Left ventricle myocardium superior (tissue), 1 donor: ENCODE measurements at regions of chr9 and their contacts with region 1.

Region 1: DNA sequence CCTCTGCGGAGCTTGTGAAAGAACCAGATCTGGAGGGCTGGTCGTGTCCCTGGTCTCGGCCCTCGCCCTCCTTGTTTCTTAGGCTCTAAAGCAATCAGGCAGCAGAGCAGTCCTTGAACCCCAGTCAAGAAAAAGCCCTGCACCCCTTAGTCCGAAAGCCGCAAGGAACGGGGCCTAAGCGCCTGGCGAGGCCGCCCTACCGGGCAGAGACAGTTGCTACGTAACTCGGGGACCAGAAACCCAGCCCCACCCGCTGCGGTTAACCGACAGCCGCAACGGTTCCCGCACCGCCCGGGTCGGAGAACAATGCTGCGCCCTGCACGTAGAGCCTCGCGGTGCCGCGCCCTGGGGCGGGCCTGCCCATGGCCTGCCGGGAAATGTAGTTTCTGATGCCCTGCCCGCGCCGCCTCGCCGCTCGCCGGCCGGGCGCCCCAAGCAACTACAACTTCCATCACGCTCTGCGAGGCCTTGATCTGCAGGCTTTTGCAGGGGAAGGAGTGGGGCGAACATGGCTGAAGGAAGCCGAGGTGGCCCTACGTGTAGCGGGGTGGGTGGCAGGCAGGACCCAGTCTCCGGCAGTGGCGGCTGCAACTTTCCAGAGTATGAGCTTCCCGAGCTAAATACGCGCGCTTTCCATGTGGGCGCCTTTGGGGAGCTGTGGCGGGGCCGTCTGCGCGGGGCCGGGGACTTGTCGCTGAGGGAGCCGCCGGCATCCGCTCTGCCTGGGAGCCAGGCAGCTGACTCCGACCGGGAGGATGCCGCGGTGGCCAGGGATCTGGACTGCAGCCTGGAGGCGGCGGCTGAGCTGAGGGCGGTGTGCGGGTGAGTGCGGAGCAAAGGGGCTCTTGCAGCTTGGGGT is at the start of gene SNAPC3:
- DNase-seq: peak; percentile 97
- ATAC-seq: peak; percentile 100
- total RNA-seq, gene SNAPC3: 30.9 TPM

Region 2: GRCh38 chr9:15306757-15307534 is 115.7 kb before region 1 on chr9 and contains the start of gene TTC39B:
- intact Hi-C with region 1: loop called (anchors 10 kb)
- DNase-seq: peak; percentile 96
- ATAC-seq: peak; percentile 99
- total RNA-seq, gene TTC39B: 1.4 TPM